HCT116 (cell line): ENCODE measurements at regions of chr1 and their contacts with region 1.

Region 1: GRCh38 chr1:178273707-178274410 is 180.0 kb downstream of the RASAL2 start:
- DNase-seq: no peak
- ATAC-seq: no peak
- H3K4me3 ChIP-seq: no peak overlapping the region
- H3K27ac ChIP-seq: no peak overlapping the region
- H3K4me1 ChIP-seq: peaks cover 0 to 14% of the 10 kb centered on the region in 2 experiments; a peak in 1 of 4 replicates
- H3K27me3 ChIP-seq: no peaks in the 10 kb centered on the region
- CTCF ChIP-seq: no peak
- POLR2A ChIP-seq: no peak
- RAD21 ChIP-seq: no peak

Region 2: DNA sequence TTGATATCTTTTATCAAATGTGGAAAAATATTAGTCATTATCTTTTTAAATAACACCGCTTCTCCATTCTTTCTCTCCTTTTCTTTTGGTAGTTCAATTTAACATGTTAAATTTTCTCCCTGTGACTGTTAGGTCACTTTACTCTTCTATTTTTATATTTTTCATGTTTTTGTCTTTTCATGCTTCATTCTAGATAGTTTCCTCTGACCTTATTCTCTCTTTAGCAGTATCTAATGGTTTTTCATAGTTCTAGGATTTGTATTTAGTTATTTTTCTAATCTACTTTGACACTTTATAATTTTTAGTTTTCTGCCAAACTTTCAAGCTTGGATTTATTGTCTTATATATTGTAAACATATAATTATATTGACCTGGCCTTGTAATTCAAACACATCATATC is 63.9 kb before region 1 on chr1:
- CTCF ChIA-PET with region 1: no interaction called
- POLR2A ChIA-PET with region 1: no interaction called
- RAD21 ChIA-PET with region 1: no interaction called
- intact Hi-C with region 1: loop called (anchors 10 kb)
- DNase-seq: no peak
- ATAC-seq: no peak
- H3K4me3 ChIP-seq: no peak overlapping the region
- H3K27ac ChIP-seq: no peak overlapping the region
- H3K4me1 ChIP-seq: no peaks in the 10 kb centered on the region
- H3K27me3 ChIP-seq: no peaks in the 10 kb centered on the region
- CTCF ChIP-seq: no peak
- POLR2A ChIP-seq: no peak
- RAD21 ChIP-seq: no peak

Region 3: DNA sequence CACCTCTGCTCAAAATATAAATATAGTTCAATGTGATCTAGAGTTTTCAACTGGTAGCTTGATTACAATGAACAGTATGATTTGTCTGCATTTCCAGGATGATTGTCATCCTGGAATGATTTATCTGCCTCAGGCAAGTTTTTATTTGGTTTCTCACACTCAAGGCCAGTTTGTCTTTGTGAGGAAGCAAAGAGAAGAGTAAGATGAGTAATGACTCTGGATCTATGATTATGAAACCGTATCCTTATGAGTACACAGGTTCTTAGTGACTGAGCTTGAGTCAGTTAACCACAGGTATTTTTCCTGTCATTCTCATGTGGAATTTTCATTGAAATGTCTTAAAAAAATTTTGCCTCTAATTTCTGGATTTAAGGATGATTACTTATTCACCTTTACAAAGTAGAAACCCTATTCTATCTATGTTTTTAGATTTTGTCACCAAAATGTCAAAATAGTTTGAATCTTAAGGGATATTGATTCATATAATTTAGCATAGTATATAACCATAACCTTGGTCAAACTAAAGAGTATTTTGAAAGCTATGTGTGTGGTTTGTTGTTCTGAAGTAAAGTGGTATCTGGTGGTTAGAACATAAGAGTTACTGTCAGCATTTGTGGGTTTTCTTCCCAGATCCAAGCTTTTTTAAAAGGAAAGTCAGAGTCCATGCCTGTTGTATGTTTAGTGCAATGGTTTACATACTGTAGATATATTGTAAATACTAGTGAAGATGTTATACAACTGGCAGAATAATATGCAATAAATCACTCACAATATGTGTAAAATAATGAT is 34.9 kb before region 1 on chr1:
- CTCF ChIA-PET with region 1: no interaction called
- POLR2A ChIA-PET with region 1: no interaction called
- RAD21 ChIA-PET with region 1: no interaction called
- intact Hi-C with region 1: no loop called
- DNase-seq: peak; percentile 98
- ATAC-seq: peak; percentile 93
- H3K4me3 ChIP-seq: peak overlapping the region in 1 of 2 experiments; percentile 40; a peak in 2 of 4 replicates
- H3K27ac ChIP-seq: peak overlapping the region; percentile 70; the same call in 1 of the 2 replicates
- H3K4me1 ChIP-seq: peaks cover 31 to 78% of the 10 kb centered on the region in 2 experiments
- H3K27me3 ChIP-seq: no peaks in the 10 kb centered on the region
- CTCF ChIP-seq: no peak
- POLR2A ChIP-seq: no peak
- RAD21 ChIP-seq: peak; percentile 29; the same call in 1 of the 2 replicates

Region 4: DNA sequence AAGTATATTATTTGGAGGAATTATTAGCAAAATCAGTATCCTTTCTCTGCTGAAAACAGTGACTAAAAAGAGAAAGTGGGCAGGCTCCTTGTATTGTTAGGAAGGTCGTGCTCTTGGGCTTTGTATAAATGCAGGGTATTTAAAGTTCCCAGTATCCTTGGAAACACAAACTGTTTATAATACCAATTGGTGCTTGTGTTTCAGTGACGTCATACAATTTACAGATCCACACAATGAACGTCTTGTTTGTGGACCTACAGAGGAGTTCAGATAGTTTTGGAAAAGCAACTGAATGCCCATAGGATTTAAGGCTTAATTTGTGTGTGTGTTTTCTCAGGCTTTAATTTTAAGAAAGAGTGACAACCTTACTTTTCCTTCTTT is 11.7 kb before region 1 on chr1:
- CTCF ChIA-PET with region 1: no interaction called
- POLR2A ChIA-PET with region 1: no interaction called
- RAD21 ChIA-PET with region 1: no interaction called
- intact Hi-C with region 1: no loop called
- DNase-seq: no peak
- ATAC-seq: no peak
- H3K4me3 ChIP-seq: no peak overlapping the region
- H3K27ac ChIP-seq: no peak overlapping the region
- H3K4me1 ChIP-seq: peaks cover 0 to 4% of the 10 kb centered on the region in 2 experiments; a peak in 2 of 4 replicates
- H3K27me3 ChIP-seq: no peaks in the 10 kb centered on the region
- CTCF ChIP-seq: no peak
- POLR2A ChIP-seq: no peak
- RAD21 ChIP-seq: no peak